ENCODE measurements at regions of chr11 and their contacts with region 1.

Region 1: GRCh38 chr11:124953753-124954589 is at the start of gene CCDC15:
- DNase-seq: peak; percentile 97
- H3K4me3 ChIP-seq: peak within 1 kb of the TSS; percentile 87
- H3K27ac ChIP-seq: peak within 1 kb of the TSS; percentile 63
- H3K4me1 ChIP-seq: peaks cover 24% of the 10 kb centered on the region
- CTCF ChIP-seq: no peak
- total RNA-seq, gene CCDC15: 9.8 and 10.6 TPM in 2 replicates

Region 2: DNA sequence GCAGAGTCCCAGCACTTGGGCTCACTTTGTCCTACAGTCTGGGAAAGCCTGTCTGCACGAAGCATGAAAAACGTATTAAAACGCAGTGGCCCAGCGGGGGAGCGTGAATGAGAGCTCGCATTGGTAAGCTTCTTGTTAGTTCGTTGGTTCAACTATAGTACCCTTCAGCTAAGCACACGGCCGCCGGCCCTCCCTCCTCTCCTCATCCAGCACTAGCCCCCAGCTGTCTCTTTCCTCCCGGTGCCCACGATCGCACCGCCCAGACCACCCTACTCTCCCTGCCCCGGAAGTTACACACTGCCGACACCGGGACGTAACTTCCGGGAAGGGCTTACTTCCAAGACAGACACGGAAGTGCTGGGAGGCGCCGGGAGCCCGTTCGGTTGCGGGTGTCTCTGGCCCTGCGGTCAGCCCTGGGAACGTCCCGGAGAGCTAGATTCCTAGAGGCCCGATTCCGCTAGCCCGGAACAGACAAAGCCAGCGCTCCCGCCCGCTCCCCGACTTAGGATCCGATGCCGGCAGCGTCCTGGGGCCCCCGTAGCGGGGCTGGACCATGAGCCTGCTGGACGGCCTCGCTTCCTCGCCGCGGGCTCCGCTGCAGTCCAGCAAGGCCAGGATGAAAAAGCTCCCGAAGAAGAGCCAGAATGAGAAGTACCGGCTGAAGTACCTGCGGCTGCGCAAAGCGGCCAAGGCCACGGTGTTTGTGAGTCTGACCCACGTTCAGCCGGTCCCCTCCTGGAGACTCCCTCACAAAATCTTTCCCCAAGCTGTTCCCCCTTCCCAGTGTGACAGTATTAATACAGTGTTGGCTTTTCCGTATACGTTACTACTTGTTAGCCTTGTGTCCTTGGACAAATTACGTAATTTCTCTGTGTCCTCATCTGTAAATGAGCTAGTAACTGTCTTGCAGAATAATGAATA is 331.2 kb before region 1 on chr11 and contains the start of gene TBRG1:
- CTCF ChIA-PET with region 1: no interaction called
- POLR2A ChIA-PET with region 1: interaction called, 3 read pairs
- intact Hi-C with region 1: loop called (anchors 5 kb)
- DNase-seq: peak; percentile 89
- H3K4me3 ChIP-seq: peak within 1 kb of the TSS; percentile 85
- H3K27ac ChIP-seq: no peak within 1 kb of the TSS
- H3K4me1 ChIP-seq: peaks cover 11% of the 10 kb centered on the region
- CTCF ChIP-seq: no peak
- total RNA-seq, gene TBRG1: 23.3 and 30.0 TPM in 2 replicates

Region 3: GRCh38 chr11:124673333-124674167 is 280.4 kb before region 1 on chr11 and contains the starts of genes SIAE and SPA17:
- CTCF ChIA-PET with region 1: no interaction called
- POLR2A ChIA-PET with region 1: interaction called, 4 read pairs
- intact Hi-C with region 1: loop called (anchors 2 kb)
- DNase-seq: peak; percentile 93
- H3K4me3 ChIP-seq: peak within 1 kb of the TSS; percentile 79
- H3K27ac ChIP-seq: peak within 1 kb of the TSS; percentile 30
- H3K4me1 ChIP-seq: peaks cover 45% of the 10 kb centered on the region
- CTCF ChIP-seq: no peak
- total RNA-seq, gene SIAE: 2.6 and 4.8 TPM in 2 replicates
- total RNA-seq, gene SPA17: 2.4 and 5.1 TPM in 2 replicates

Region 4: DNA sequence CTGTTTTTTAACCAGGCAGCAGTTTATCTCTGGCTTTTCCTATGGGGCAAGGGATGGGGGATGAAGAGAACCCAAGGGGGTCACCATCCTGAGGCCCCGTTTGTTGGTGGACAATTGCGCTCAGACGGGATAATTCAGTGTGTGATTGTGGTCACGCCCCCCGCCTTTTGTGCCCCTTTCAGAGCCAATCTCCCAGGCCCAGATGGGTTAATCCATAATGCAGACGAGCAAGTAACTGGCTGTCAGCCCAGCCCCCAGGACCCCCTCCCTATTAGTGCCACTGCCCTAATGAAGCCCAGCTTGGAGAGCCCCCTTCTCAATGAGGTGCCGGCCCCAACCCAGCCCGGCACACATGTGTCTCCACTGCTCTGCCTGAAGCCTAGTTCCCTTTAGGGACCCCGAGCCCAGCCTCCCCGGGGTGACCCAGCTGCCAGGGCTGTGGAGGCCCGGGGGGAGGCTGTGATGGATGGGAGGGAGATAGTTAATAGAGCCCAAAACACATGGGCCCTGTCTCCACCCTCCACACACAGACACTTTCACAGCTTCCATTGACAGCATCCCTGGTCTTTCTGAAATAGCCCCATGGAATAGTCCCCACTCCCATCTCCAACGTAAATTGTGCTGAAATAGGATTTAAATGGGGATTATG is 107.8 kb before region 1 on chr11:
- CTCF ChIA-PET with region 1: no interaction called
- POLR2A ChIA-PET with region 1: no interaction called
- intact Hi-C with region 1: no loop called
- DNase-seq: no peak
- H3K4me3 ChIP-seq: no peak overlapping the region
- H3K27ac ChIP-seq: no peak overlapping the region
- H3K4me1 ChIP-seq: no peaks in the 10 kb centered on the region
- CTCF ChIP-seq: no peak

Region 5: DNA sequence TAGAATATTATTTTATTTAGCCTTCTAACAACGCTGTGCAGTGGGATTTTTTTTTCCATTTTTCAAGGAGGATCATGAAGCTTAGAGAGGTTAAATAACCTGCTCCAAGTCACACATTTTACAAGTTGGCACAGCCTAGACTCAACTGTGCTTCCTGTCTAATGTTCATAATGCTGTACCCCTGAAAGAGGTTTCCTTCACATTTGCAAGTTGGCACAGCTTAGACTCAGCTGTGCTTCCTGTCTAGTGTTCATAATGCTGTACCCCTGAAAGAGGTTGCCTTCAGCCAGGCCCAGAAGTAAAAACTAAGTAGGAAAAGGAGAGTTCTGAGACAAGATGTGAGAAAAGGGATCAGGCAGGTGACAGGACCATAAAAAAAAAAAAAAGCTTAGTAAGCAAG is 10.2 kb before region 1 on chr11:
- CTCF ChIA-PET with region 1: no interaction called
- POLR2A ChIA-PET with region 1: interaction called, 15 read pairs
- intact Hi-C with region 1: no loop called
- DNase-seq: no peak
- H3K4me3 ChIP-seq: no peak overlapping the region
- H3K27ac ChIP-seq: no peak overlapping the region
- H3K4me1 ChIP-seq: no peaks in the 10 kb centered on the region
- CTCF ChIP-seq: no peak

Region 6: DNA sequence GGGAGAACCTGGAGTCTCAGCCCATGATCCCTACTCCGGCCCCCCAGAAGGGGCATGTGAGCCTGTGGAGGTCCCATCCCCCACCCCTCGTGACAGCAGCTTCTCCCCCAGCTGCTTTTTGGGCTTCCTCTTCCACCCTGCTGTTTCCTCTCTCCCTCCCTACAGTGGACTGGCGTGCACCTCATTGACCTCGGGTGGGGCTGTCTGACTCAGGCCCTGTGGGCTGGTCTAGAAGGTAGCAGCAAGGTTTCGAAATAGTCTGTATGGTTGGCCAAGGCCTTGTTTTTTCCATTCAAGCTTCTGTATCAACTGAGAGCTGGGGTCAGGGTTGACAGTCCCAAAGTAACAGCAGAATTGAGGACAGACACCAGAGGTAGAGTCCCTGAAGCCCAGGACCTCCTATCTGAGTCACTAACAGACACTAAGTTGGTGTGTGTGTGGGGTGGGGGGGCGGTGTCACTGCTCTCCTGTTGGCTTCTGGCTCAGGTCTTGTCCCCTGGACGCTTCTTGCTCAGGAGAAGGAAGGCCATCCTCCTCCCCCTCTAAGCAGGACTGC is 116.8 kb after region 1 on chr11:
- CTCF ChIA-PET with region 1: interaction called, 7 read pairs
- POLR2A ChIA-PET with region 1: no interaction called
- intact Hi-C with region 1: loop called (anchors 2 kb)
- DNase-seq: peak; percentile 33
- H3K4me3 ChIP-seq: no peak overlapping the region
- H3K27ac ChIP-seq: no peak overlapping the region
- H3K4me1 ChIP-seq: peaks cover 45% of the 10 kb centered on the region
- CTCF ChIP-seq: no peak

Region 7: GRCh38 chr11:125348674-125349309 is 394.8 kb after region 1 on chr11:
- CTCF ChIA-PET with region 1: no interaction called
- POLR2A ChIA-PET with region 1: no interaction called
- intact Hi-C with region 1: loop called (anchors 2 kb)
- DNase-seq: peak; percentile 31
- H3K4me3 ChIP-seq: no peak overlapping the region
- H3K27ac ChIP-seq: no peak overlapping the region
- H3K4me1 ChIP-seq: no peaks in the 10 kb centered on the region
- CTCF ChIP-seq: peak; percentile 87